Left cardiac atrium (tissue), 4 donors: ENCODE measurements at regions of chr21 and their contacts with region 1.

Region 1: GRCh38 chr21:34078915-34079314 is 5.5 kb downstream of the MRPS6 start:
- DNase-seq: no peak
- ATAC-seq: no peak

Region 2: DNA sequence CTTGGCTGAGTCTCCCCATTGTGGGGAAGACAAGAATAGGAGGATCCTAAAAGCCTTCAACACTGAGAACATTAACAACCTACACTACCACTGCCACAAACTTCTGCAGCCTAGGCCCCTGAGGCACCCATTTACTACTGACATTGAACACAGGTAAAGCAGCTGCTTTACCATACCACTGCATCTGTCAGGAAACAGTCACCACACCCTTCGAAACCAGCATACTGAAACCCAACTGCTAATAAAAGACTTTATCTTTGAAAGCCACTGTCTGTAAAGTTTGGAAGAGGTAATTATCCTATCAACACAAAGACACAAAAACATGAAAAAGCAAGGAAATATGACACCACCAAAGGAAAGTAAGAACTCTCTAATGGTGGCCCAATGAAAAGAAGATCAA is 746.8 kb before region 1 on chr21:
- intact Hi-C with region 1: no loop called
- DNase-seq: no peak
- ATAC-seq: no peak

Region 3: GRCh38 chr21:33976082-33977016 is 102.6 kb before region 1 on chr21:
- intact Hi-C with region 1: no loop called
- DNase-seq: peak; percentile 66
- ATAC-seq: peak; percentile 72 to 79

Region 4: DNA sequence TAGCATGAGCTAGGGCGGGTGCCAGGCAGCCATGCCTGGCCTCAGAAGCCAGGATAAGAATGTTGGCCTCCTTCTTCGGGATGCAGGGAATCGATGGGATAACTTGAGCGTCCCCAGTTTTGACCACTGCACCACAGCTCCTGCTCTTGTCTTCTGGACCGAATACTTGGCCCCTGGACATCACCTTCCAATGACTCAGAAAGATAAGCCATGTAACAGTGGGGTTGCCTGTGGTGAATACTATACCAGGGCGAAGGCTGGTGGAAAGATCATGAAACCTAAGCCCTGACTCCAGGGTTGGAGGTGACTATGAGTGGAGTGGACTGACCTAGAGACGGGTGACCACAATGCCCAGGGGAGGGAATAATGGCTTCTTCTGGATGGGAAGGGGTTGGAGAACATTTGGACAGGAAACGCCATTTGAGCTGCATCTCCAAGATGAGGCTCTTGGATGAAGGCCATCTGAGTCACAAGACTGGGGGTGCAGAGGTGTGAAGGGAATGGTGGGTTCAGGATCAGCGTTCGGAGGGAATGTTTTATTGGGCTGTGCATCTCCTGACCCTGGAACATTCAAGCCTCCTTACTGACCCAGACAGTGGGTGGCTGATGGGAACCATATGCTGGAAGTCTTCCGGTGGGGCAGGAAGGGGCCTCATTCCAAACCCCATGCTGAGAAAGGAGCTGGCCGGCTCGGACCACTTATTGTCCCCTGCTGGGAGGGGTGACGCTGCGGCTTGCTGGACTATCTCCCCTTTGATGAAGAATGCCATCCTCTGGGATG is 266.4 kb after region 1 on chr21:
- intact Hi-C with region 1: loop called in 1 of 2 experiments (anchors 5 kb)
- DNase-seq: no peak
- ATAC-seq: peak; percentile 35 to 58

Region 5: GRCh38 chr21:34582506-34583150 is 503.7 kb after region 1 on chr21:
- intact Hi-C with region 1: no loop called
- DNase-seq: peak; percentile 29
- ATAC-seq: peak; percentile 73 to 79